HepG2 (cell line): ENCODE measurements at regions of chr10 and their contacts with region 1.

Region 1: GRCh38 chr10:58952747-58953466 is 223.5 kb upstream of the PHYHIPL start:
- DNase-seq: peak; percentile 53
- ATAC-seq: peak; percentile 86
- H3K4me3 ChIP-seq: no peak overlapping the region
- H3K27ac ChIP-seq: no peak overlapping the region
- H3K4me1 ChIP-seq: peaks cover 58% of the 10 kb centered on the region
- H3K27me3 ChIP-seq: no peaks in the 10 kb centered on the region
- CTCF ChIP-seq: peak; percentile 82
- EP300 ChIP-seq: no peak
- POLR2A ChIP-seq: no peak
- RAD21 ChIP-seq: peak; percentile 87

Region 2: GRCh38 chr10:58734116-58734515 is 218.8 kb before region 1 on chr10:
- CTCF ChIA-PET with region 1: no interaction called
- POLR2A ChIA-PET with region 1: no interaction called
- in situ Hi-C with region 1: no loop called
- intact Hi-C with region 1: no loop called
- DNase-seq: no peak
- ATAC-seq: no peak
- H3K4me3 ChIP-seq: no peak overlapping the region
- H3K27ac ChIP-seq: no peak overlapping the region
- H3K4me1 ChIP-seq: no peaks in the 10 kb centered on the region
- H3K27me3 ChIP-seq: no peaks in the 10 kb centered on the region
- CTCF ChIP-seq: no peak
- EP300 ChIP-seq: no peak
- POLR2A ChIP-seq: no peak
- RAD21 ChIP-seq: no peak

Region 3: GRCh38 chr10:59079386-59080226 is 126.7 kb after region 1 on chr10:
- CTCF ChIA-PET with region 1: no interaction called
- POLR2A ChIA-PET with region 1: no interaction called
- in situ Hi-C with region 1: no loop called
- intact Hi-C with region 1: no loop called
- DNase-seq: peak; percentile 39
- ATAC-seq: no peak
- H3K4me3 ChIP-seq: no peak overlapping the region
- H3K27ac ChIP-seq: peak overlapping the region; percentile 35
- H3K4me1 ChIP-seq: peaks cover 67% of the 10 kb centered on the region
- H3K27me3 ChIP-seq: no peaks in the 10 kb centered on the region
- CTCF ChIP-seq: no peak
- EP300 ChIP-seq: peak in 1 of 2 experiments; percentile 31; a peak in 1 of 4 replicates
- POLR2A ChIP-seq: no peak
- RAD21 ChIP-seq: no peak

Region 4: DNA sequence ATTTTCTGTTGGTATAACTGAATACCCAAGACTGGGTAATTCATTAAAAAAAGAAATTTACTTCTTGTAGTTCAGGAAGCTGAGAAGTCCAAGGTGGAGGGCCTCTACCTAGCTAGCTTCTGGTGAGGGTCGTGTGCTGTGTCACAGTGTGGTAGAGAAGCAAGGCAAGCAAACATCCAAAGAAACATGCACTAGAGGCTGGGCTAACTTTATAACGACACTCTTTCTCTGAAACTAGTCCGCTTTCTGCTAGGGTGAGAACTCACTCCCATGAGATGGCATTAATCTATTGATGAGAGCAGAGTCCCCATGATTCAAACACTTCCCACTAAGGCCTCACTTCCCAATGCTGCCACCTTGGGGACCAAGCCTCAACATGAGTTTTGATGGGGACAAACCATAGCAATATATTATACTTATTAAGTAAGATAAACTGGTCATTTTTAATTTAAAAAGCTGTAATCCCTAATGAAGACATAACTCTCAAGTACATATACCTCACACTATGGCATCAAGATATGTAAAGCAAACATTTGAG is 274.3 kb after region 1 on chr10:
- CTCF ChIA-PET with region 1: no interaction called
- POLR2A ChIA-PET with region 1: no interaction called
- in situ Hi-C with region 1: loop called (anchors 10 kb)
- intact Hi-C with region 1: loop called (anchors 5 kb)
- DNase-seq: no peak
- ATAC-seq: peak; percentile 54
- H3K4me3 ChIP-seq: no peak overlapping the region
- H3K27ac ChIP-seq: no peak overlapping the region
- H3K4me1 ChIP-seq: peaks cover 33% of the 10 kb centered on the region
- H3K27me3 ChIP-seq: no peaks in the 10 kb centered on the region
- CTCF ChIP-seq: 0 out of 2 replicates have a peak, but pooled peaks have one; percentile 20
- EP300 ChIP-seq: no peak
- POLR2A ChIP-seq: no peak
- RAD21 ChIP-seq: no peak

Region 5: DNA sequence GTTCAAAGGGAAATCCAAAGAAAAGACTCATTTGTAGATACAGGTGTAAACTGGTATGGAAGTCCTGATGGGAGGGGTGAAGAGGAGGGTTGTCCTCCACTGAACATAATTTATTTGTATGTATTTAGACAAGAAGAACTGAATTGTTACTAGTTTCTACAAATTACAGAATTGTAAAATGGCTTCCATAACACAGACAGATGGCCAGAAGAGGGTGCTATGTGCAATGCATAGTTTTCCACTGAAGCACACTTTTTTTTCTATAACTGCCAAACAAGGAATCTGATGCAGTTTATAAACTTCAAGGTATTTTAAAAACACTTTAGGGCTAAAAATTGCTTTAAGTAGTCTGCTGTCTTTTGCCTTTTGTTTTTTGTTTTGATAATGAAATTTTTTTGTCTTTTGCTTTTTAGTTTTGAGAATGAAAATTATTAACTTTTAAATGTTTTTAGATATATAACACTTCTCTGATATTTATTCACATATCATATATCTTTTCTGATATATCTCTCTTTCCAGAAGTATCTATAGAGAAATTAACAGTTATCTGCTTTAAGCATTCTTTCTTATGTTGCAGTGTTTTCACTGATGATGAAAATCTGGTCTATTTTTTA is 282.0 kb after region 1 on chr10:
- CTCF ChIA-PET with region 1: no interaction called
- POLR2A ChIA-PET with region 1: no interaction called
- in situ Hi-C with region 1: loop called (anchors 10 kb)
- intact Hi-C with region 1: loop called (anchors 2 kb)
- DNase-seq: no peak
- ATAC-seq: no peak; the same call in 2 of the 3 replicates
- H3K4me3 ChIP-seq: no peak overlapping the region
- H3K27ac ChIP-seq: no peak overlapping the region
- H3K4me1 ChIP-seq: peaks cover 5% of the 10 kb centered on the region; the same call in 1 of the 2 replicates
- H3K27me3 ChIP-seq: no peaks in the 10 kb centered on the region; a peak in 1 of 5 replicates
- CTCF ChIP-seq: peak; percentile 54
- EP300 ChIP-seq: no peak
- POLR2A ChIP-seq: no peak
- RAD21 ChIP-seq: no peak